GM12878 (cell line): ENCODE measurements at regions of chr5 and their contacts with region 1.

Region 1: DNA sequence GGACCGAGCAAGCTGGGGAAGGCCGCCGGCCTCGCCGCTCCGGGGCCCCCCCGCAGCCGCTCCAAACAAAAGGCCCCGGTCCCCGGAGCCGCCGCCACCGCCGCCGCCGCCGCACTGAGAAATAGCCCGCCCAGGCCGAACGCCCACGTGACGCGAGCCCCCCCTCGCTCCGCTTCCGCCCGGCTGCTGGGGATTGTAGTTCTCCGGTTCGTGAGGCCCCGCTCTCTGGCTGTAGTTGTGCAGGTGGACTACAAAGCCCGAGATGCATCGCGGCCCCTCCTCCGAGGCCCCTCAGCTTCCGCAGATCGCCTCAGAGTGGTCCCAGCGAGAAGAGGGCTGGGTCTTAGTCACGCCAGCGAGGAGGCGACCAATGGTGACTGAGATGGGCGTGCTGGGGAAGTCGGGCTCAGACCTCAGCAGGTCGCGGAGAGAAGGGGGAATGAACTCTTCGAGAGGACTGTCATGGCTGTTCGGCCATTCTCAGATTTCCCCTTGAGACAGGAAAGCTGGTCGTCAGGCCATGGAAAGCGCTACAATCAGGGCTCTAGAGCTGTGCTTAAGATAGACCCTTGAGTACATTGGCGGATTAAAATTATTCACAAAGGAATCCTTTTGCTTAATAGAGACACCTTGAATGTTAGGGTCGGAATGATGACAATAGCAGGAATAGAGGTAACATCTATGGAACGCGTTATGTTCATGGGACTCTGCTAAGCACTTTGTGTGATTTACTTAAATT is 489 bp upstream of the PANK3 start:
- DNase-seq: peak; percentile 97
- ATAC-seq: peak; percentile 92
- H3K4me3 ChIP-seq: peak overlapping the region; percentile 89
- H3K27ac ChIP-seq: peak overlapping the region; percentile 98
- H3K4me1 ChIP-seq: peaks cover 19% of the 10 kb centered on the region
- H3K27me3 ChIP-seq: no peaks in the 10 kb centered on the region
- CTCF ChIP-seq: no peak
- EP300 ChIP-seq: peak in 1 of 2 experiments; percentile 52; a peak in 1 of 4 replicates
- POLR2A ChIP-seq: peak; percentile 94
- RAD21 ChIP-seq: no peak

Region 2: GRCh38 chr5:168291464-168291961 is 288.1 kb before region 1 on chr5 and contains the start of gene WWC1:
- CTCF ChIA-PET with region 1: no interaction called
- POLR2A ChIA-PET with region 1: no interaction called
- RAD21 ChIA-PET with region 1: no interaction called
- SMC1A ChIA-PET with region 1: no interaction called
- in situ Hi-C with region 1: no loop called
- intact Hi-C with region 1: loop called (anchors 10 kb)
- DNase-seq: peak; percentile 31
- ATAC-seq: peak; percentile 85
- H3K4me3 ChIP-seq: peak within 1 kb of the TSS; percentile 70
- H3K27ac ChIP-seq: no peak within 1 kb of the TSS
- H3K4me1 ChIP-seq: peaks cover 26% of the 10 kb centered on the region
- H3K27me3 ChIP-seq: no peaks in the 10 kb centered on the region
- CTCF ChIP-seq: peak in 2 of 3 experiments; percentile 4 to 20; a peak in 1 of 6 replicates
- EP300 ChIP-seq: no peak
- POLR2A ChIP-seq: peak; percentile 76
- RAD21 ChIP-seq: peak; percentile 24; the same call in 1 of the 2 replicates
- polyA plus RNA-seq, gene WWC1: 0.50 to 1.2 TPM